Activated CD4-positive, alpha-beta memory T cell treated with anti-CD3 and anti-CD28 coated beads, Interleukin-2, amount 10 ng/mL, durations not matched to agents 7 days and 5 days (primary cell): ENCODE measurements at regions of chr6 and their contacts with region 1.

Region 1: GRCh38 chr6:30130887-30131862 is 4.8 kb upstream of the TRIM40 start:
- DNase-seq: peak; percentile 70
- H3K4me3 Mint-ChIP-seq: no peak overlapping the region
- H3K27ac Mint-ChIP-seq: no peak overlapping the region
- H3K4me1 Mint-ChIP-seq: peaks cover 21% of the 10 kb centered on the region
- H3K27me3 Mint-ChIP-seq: peaks cover 69% of the 10 kb centered on the region

Region 2: DNA sequence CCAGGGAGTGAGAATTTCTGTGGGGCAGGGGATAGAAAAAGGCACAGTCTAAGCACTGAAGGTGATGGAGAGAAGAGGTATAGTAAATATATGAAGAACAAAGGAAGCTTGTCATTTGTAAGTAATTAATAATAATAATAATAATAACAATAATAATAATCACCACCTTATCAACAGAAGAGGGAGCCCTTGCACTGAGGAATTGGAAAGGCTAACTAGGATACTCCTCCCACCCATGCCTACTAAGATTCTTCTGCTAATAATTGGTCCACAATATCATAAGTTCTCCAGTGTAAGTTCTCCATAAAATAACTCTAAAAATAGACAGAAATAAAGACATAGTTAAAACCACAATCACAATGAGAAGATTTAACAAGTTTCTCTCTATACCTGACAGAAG is 755.2 kb before region 1 on chr6:
- CTCF ChIA-PET with region 1: no interaction called
- POLR2A ChIA-PET with region 1: no interaction called
- DNase-seq: no peak
- H3K4me3 Mint-ChIP-seq: no peak overlapping the region
- H3K27ac Mint-ChIP-seq: no peak overlapping the region
- H3K4me1 Mint-ChIP-seq: no peaks in the 10 kb centered on the region
- H3K27me3 Mint-ChIP-seq: peaks cover 8% of the 10 kb centered on the region

Region 3: GRCh38 chr6:29926413-29927274 is 204.5 kb before region 1 on chr6:
- CTCF ChIA-PET with region 1: no interaction called
- POLR2A ChIA-PET with region 1: no interaction called
- DNase-seq: peak; percentile 91
- H3K4me3 Mint-ChIP-seq: peak overlapping the region; percentile 84
- H3K27ac Mint-ChIP-seq: peak overlapping the region; percentile 85
- H3K4me1 Mint-ChIP-seq: peaks cover 36% of the 10 kb centered on the region
- H3K27me3 Mint-ChIP-seq: no peaks in the 10 kb centered on the region

Region 4: DNA sequence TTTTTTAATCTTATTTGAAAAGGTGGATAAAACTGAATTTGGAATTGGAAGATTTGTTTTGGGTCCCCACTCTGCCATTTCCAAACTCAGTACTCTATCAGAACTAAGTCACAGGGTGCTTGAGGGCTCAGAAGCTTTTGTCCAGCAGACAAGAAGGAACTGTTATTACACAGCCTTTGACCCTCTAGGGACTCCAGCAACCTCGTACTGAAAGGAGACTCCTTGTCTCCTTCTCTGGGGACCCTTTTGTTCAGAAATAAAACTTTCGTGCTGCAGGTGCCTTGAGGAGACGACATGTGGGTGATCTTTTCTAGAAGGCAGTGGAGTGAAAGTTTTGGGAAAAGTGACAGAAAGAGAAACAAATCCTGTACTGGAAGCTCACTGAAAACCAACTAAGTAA is 77.5 kb before region 1 on chr6:
- CTCF ChIA-PET with region 1: no interaction called
- POLR2A ChIA-PET with region 1: no interaction called
- DNase-seq: no peak
- H3K4me3 Mint-ChIP-seq: no peak overlapping the region
- H3K27ac Mint-ChIP-seq: no peak overlapping the region
- H3K4me1 Mint-ChIP-seq: peaks cover 4% of the 10 kb centered on the region
- H3K27me3 Mint-ChIP-seq: no peaks in the 10 kb centered on the region

Region 5: GRCh38 chr6:30075161-30075986 is 55.8 kb before region 1 on chr6 and contains the start of gene RNF39:
- CTCF ChIA-PET with region 1: interaction called, 11 read pairs
- POLR2A ChIA-PET with region 1: no interaction called
- DNase-seq: no peak
- H3K4me3 Mint-ChIP-seq: no peak within 1 kb of the TSS
- H3K27ac Mint-ChIP-seq: no peak within 1 kb of the TSS
- H3K4me1 Mint-ChIP-seq: peaks cover 48% of the 10 kb centered on the region
- H3K27me3 Mint-ChIP-seq: peaks cover 79% of the 10 kb centered on the region
- total RNA-seq, gene RNF39: not detected

Region 6: DNA sequence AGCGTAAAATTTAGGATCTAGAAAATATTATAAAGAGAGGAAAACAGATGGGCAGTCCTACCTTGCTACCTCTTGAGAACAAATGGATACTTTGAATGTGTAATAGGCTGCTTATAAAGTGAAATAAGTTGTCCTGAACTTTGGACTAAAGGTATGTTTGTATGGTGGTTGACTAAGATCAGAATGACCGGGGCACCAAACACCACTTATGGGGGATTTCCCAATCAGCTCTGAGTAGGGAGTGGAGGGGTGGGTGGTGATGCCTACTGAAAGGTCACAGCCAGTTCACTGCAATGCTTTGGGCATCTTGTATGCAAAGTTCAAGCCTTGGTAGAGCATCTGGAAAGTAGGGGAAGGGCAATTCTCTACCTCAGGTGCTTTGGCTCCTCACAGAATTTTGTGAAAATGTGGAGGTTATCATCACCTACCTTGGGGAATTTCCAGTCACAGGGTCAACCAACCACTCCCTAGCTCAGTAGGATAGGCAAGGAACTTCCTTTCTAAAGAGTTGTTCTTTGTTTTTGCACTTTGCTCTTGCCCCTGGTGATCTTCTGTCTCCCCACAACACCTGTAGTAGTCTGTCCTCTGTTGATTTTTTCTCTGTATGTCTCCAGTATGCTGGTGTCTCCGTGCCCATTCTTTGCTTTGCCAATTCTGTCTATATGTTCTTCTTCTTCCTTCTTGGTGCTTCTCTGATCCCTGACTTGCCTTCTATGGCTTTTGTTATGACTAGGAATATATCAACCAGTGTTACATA is 18.0 kb before region 1 on chr6 and contains the start of gene TRIM31:
- CTCF ChIA-PET with region 1: interaction called, 16 read pairs
- POLR2A ChIA-PET with region 1: interaction called, 3 read pairs
- DNase-seq: no peak
- H3K4me3 Mint-ChIP-seq: no peak within 1 kb of the TSS
- H3K27ac Mint-ChIP-seq: no peak within 1 kb of the TSS
- H3K4me1 Mint-ChIP-seq: peaks cover 8% of the 10 kb centered on the region
- H3K27me3 Mint-ChIP-seq: peaks cover 50% of the 10 kb centered on the region
- total RNA-seq, gene TRIM31: not detected

Region 7: GRCh38 chr6:30150671-30151395 is 19.7 kb after region 1 on chr6:
- CTCF ChIA-PET with region 1: interaction called, 10 read pairs
- POLR2A ChIA-PET with region 1: no interaction called
- DNase-seq: no peak
- H3K4me3 Mint-ChIP-seq: no peak overlapping the region
- H3K27ac Mint-ChIP-seq: no peak overlapping the region
- H3K4me1 Mint-ChIP-seq: peaks cover 8% of the 10 kb centered on the region
- H3K27me3 Mint-ChIP-seq: peaks cover 49% of the 10 kb centered on the region